Psoas muscle (tissue), 8 donors: ENCODE measurements at regions of chr1 and their contacts with region 1.

Region 1: DNA sequence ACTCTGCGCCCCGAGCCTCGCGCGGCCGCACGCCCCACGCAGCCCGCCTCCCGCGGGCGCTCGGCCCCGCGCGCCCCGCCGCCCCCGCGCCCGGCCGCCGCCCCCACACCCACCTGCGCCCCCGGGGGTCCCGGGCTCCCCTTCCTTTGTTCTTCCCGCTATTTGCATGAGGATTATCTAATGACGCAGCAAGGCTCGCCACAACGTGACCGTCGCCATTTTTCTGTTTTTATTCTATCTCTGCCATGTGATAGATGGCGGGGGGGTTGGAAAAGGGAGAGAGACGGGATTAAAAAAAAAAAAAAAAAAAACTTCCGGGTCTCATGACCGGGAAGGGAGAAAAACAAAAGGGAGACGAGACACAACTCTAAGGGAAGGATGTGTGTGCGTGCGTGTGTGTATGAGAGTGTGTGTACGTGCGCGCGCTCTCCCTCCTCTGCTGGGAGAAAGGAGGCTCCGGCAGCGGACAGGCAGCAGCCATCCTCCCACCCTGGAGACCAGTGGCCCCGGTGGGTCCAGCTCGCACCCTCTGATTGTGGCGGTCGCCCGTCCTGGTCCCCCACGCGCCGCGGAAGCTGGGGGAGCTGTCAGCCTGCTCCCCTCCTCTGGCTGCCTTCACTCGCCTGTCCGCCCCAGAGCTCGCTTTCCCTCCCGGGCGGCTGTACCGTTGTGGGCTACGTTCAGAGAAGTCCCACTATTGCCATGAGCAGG is 80.4 kb upstream of the AK4 start:
- DNase-seq: peak; percentile 63 to 83
- ATAC-seq: peak; percentile 43 to 55 (median 44)
- H3K4me3 ChIP-seq: peak overlapping the region; percentile 94
- H3K27ac ChIP-seq: peak overlapping the region; percentile 100
- H3K4me1 ChIP-seq: peaks cover 27% of the 10 kb centered on the region
- H3K27me3 ChIP-seq: no peaks in the 10 kb centered on the region
- CTCF ChIP-seq: no peak

Region 2: GRCh38 chr1:64898107-64898845 is 169.4 kb before region 1 on chr1:
- intact Hi-C with region 1: loop called in 1 of 2 experiments (anchors 10 kb)
- DNase-seq: peak; percentile 86 to 93
- ATAC-seq: peak; percentile 97 to 98 (median 98)
- H3K4me3 ChIP-seq: peak overlapping the region; percentile 12
- H3K27ac ChIP-seq: peak overlapping the region; percentile 89
- H3K4me1 ChIP-seq: peaks cover 49% of the 10 kb centered on the region
- H3K27me3 ChIP-seq: no peaks in the 10 kb centered on the region
- CTCF ChIP-seq: no peak

Region 3: DNA sequence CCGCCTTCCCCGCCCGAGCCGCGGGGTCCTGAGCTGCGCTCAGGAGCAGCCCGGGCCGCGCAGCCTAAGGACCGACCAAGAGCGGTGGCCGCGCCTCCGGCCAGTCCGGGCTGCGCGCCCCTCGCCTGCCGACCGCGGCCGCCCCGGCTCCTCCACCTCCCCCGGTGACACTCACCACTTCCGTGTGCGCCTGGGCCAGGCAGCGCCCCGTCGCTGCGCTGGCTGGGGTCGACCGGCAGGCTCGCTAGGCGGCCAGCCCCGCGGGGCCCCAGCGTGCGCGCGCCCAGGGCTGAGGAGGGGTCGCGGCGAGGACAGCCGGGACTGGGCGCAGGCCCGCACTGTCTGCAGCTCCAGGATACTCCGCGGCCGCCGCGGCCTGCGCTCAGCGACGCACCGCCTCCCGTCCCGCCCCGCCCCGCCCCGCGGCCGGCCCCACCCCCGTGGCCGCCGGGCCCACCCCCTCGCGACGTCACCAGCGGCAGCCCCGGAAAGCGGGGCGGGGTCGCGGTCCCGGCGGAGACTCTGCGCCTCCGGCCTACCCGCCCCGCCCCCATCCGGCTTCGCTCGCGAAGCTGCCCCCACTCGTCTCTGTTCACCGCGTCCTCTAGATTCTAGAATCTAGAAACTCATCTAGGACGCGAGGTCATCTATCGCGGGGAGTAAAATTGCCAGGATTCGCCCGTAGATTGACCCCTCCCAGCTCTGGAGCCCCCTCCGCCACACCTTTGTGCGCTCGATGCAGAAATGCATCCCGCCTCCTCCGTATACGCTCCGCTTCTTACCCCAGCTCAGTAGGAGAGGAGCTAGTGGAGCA is 101.3 kb before region 1 on chr1 and contains the start of gene JAK1:
- intact Hi-C with region 1: loop called in 1 of 2 experiments (anchors 5 kb)
- DNase-seq: peak; percentile 90 to 93
- ATAC-seq: peak; percentile 88 to 93 (median 91)
- H3K4me3 ChIP-seq: peak within 1 kb of the TSS; percentile 88
- H3K27ac ChIP-seq: peak within 1 kb of the TSS; percentile 98
- H3K4me1 ChIP-seq: peaks cover 40% of the 10 kb centered on the region
- H3K27me3 ChIP-seq: no peaks in the 10 kb centered on the region
- CTCF ChIP-seq: peak; percentile 14
- total RNA-seq, gene JAK1: 101 to 137 (median 119) TPM

Region 4: DNA sequence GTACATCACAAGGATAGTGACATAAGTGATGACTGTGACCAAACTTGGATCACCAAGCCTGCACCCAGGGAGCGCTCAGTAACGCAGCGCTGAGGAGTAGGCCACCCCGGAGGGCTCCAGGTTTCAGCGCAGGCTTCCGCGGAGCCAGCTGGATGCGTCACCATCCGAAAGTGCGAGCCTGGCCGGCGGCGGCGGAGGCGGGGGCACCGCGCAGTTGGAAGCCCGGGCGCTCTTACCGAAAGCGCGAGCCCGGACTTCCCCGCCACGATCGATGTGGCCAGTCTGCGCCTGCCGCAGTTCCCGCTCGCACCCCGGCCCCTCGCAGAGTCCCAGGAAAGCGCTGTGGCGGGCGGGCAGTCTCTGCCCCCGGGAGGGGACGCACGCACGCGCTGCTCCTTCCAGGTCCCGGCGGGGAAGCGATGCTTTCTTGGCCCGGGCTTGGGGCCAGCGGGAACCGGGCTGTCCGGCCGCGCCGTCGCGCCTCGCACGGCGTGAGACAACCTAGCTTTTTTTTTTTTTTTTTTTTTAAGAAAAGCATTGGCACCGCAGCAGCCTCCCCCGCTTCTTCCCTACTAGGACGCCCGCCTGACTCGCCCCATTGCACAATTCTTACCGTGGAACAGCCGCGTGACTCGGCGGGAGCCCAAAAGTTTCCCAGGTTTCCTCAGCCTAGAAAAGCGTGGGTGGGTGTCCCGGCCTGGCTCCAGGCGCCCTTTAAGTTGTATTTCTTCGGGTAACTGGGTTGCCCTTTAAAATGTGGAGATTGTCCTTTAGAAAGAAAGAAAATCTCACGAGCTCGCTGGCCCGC is 64.9 kb before region 1 on chr1:
- intact Hi-C with region 1: loop called in 1 of 2 experiments (anchors 2 kb)
- DNase-seq: peak; percentile 91 to 95
- ATAC-seq: peak; percentile 95 to 97 (median 96)
- H3K4me3 ChIP-seq: peak overlapping the region; percentile 84
- H3K27ac ChIP-seq: peak overlapping the region; percentile 99
- H3K4me1 ChIP-seq: peaks cover 11% of the 10 kb centered on the region
- H3K27me3 ChIP-seq: no peaks in the 10 kb centered on the region
- CTCF ChIP-seq: no peak

Region 5: DNA sequence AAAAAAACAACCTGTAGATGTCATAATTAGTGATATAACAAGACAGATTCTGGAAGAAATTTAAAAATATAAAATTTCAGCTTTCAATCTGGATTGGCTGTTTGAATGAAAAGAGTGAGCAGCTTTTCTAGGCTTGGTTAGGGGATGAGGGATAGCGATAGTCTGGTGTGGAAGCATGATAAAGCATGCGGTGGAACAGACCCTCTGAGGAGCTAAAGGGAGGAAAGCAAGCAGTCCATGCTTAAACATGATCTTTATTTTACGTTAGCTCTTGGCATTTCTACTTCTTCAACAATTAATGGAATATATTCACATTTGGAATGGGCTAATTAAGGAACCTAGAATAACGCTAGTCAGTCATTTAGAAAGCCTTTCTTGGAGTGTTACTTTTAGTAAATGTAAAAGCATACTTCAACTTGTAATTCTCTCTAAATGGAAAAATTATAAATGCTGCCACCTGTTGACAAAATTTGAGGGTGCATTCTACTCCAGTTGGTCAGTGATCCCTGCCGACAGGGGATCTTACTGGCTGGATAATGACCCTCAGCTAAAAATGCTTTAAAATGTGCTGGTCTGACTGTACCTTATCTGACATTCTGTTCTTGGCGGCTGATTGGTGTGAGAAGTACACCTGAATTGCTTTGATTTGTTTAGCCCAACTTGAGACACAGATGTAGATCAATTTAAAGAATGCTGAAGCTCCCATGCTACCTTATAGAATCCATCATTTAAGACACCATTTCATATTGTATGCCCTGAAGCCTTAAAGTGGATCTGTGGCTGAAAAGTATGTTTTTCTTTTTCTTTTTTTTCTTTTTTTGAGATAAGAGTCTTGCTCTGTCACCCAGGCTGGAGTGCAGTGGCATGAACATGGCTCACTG is 141.6 kb after region 1 on chr1:
- intact Hi-C with region 1: loop called in 1 of 2 experiments (anchors 5 kb)
- DNase-seq: no peak
- ATAC-seq: peak; percentile 28 to 68 (median 40)
- H3K4me3 ChIP-seq: no peak overlapping the region
- H3K27ac ChIP-seq: no peak overlapping the region
- H3K4me1 ChIP-seq: no peaks in the 10 kb centered on the region
- H3K27me3 ChIP-seq: no peaks in the 10 kb centered on the region
- CTCF ChIP-seq: peak; percentile 56

Region 6: DNA sequence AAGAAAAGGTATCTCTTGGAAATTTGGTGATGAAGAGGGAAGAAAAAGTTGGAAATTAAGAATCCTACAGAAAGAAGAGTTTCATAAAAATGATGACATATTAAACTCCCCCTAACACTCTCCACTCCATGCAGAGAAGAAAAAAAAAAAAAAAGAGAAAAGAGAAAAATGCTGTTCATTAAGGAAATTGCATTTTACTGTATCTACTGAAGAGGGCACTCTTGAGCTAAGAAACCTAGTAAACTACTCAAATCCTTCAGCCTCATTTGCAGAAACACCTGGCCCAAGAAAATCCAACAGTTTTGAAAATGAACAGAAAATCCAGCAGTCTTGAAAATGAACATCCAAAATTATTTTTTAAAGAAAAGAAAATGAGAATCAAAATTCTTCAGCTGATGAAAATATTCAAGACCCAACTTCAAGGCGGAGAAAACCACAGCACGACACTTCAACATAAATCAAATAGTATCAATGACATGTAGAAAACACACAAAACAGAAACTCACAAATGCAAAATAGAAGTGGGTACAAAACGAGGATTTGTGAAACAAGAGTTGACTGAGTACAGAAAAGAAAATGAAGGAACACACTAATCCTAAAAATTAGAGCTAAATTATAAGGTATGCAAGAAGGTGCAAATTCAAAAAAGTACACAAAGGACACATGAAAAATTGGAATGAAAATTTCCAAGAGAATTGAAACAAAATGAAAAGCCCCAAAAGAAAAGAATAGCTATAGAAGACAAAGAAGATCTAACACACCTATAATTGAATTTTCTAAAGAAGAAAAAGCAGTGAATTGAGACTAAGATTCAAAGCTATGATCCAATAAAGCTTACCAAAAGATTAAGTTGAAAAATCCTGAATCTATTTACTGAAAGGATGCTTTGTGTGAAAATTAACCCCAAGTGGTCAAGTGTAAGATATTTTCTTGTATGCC is 168.5 kb after region 1 on chr1:
- intact Hi-C with region 1: no loop called
- DNase-seq: no peak
- ATAC-seq: no peak
- H3K4me3 ChIP-seq: no peak overlapping the region
- H3K27ac ChIP-seq: no peak overlapping the region
- H3K4me1 ChIP-seq: no peaks in the 10 kb centered on the region
- H3K27me3 ChIP-seq: peaks cover 0 to 2% (median 0%) of the 10 kb centered on the region in 3 donors
- CTCF ChIP-seq: peak; percentile 42

Region 7: DNA sequence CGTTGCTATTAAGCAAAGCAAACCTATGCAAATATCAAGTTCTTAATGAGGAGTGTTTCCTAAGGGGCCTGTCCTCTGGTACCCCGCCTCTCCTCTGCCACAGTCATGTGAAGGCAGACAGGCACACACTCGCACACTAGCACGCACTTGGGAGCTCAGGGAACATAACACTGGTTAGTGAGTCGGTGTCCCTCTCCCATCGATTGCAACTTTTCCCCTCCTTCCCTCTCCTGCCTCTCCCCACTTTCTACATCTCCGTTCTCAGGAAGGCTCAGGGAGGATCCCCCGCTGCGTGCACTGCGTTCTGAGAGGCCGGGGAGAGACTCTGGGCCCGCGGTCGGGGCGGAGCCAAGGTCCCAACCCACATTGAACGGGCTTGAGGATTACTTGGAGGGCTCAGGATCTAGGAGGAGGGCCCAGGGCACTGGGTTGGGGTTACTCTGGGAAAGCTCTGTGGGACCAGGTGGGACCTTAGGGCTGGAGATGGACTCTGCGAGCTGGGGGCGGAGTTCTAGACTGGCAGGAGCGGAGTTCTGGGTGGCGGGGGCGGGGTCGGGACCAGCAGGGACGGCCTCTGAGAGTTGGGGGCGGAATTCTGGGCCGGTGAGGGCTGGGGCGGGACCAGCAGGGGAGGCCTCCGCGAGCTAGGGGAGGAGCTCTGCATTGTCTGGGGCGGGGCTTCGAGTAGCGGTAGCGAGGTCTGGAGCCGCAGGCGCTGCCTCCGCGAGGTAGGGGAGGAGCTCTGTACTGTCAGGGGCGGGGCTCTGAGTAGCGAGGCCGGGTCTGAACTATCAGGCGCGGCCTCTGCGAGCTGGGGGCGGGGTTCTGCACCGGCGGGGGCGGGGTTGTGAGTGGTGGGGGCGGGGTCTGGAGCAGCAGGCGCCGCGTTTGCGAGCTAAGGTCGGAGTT is 352.3 kb after region 1 on chr1:
- intact Hi-C with region 1: loop called in 1 of 2 experiments (anchors 10 kb)
- DNase-seq: peak; percentile 97 to 99
- ATAC-seq: peak; percentile 92 to 97 (median 93)
- H3K4me3 ChIP-seq: peak overlapping the region; percentile 91
- H3K27ac ChIP-seq: peak overlapping the region; percentile 98
- H3K4me1 ChIP-seq: peaks cover 34% of the 10 kb centered on the region
- H3K27me3 ChIP-seq: no peaks in the 10 kb centered on the region
- CTCF ChIP-seq: no peak